Activated naive CD4-positive, alpha-beta T cell treated with anti-CD3 and anti-CD28 coated beads for 36 hours (primary cell): ENCODE measurements at regions of chr11 and their contacts with region 1.

Region 1: DNA sequence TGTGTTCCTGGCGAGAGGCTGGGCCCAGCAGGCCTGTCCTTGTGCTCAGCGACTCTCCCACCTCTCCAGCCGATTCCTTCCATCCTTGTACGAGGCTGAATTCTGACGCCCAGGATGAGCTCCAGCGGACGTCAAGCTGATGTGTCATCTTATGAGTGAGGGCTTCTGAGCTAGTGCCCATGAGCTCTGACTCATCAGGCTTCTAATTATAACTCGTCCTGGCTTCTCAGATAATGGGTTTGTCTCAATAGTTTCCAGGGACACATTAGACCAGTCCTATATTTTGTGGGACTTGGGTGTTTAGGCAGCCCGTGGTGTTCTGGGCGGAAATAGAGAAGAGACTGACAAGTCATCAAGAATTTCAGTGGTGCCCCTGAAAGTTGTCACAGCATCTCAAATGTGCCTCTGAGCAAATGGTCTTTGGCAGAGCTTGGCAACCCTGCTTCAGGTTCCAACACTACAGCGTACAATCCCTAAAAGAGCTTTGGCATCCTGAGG is 108.2 kb upstream of the CD44 start:
- DNase-seq: peak; percentile 55
- H3K4me3 Mint-ChIP-seq: peak overlapping the region; percentile 59
- H3K27ac Mint-ChIP-seq: peak overlapping the region; percentile 93
- H3K4me1 Mint-ChIP-seq: peaks cover 44% of the 10 kb centered on the region
- H3K27me3 Mint-ChIP-seq: no peaks in the 10 kb centered on the region

Region 2: GRCh38 chr11:34614344-34615104 is 416.2 kb before region 1 on chr11:
- CTCF ChIA-PET with region 1: no interaction called
- intact Hi-C with region 1: no loop called
- DNase-seq: no peak
- H3K4me3 Mint-ChIP-seq: no peak overlapping the region
- H3K27ac Mint-ChIP-seq: no peak overlapping the region
- H3K4me1 Mint-ChIP-seq: peaks cover 15% of the 10 kb centered on the region
- H3K27me3 Mint-ChIP-seq: peaks cover 7% of the 10 kb centered on the region

Region 3: GRCh38 chr11:34904421-34904955 is 126.3 kb before region 1 on chr11:
- CTCF ChIA-PET with region 1: no interaction called
- intact Hi-C with region 1: no loop called
- DNase-seq: no peak
- H3K4me3 Mint-ChIP-seq: no peak overlapping the region
- H3K27ac Mint-ChIP-seq: no peak overlapping the region
- H3K4me1 Mint-ChIP-seq: peaks cover 4% of the 10 kb centered on the region
- H3K27me3 Mint-ChIP-seq: no peaks in the 10 kb centered on the region

Region 4: DNA sequence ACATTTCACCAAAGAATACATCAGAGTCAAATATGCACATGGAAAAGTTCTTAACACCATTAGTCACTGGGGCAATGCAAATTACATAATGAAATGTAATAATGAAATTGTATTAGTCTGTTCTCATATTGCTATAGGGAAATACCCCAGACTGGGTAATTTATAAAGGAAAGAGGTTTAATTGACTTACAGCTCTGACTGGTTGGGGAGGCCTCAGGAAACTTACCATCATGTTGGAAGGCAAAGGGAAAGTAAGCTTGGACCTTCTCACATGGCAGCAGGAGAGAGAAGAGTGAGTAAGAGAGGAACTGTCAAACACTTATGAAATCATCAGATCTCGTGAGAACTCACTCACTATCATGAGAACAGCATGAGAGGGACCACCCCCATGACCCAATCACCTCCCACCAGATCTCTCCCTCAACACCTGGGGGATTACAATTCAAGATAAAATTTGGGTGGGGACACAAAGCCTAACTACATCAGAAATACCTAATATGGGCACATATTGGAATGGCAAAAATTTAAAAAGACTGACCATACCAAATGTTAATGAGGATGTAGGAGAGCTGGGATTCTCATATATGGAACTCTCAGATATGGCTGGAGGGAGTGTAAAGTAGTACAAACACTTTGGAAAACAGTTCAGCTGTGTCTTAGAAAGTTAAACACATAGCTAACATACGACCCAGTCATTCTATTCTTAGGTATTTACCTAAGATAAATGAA is 43.1 kb after region 1 on chr11:
- CTCF ChIA-PET with region 1: no interaction called
- intact Hi-C with region 1: loop called (anchors 1 kb)
- DNase-seq: peak; percentile 68
- H3K4me3 Mint-ChIP-seq: peak overlapping the region; percentile 31
- H3K27ac Mint-ChIP-seq: peak overlapping the region; percentile 83
- H3K4me1 Mint-ChIP-seq: peaks cover 67% of the 10 kb centered on the region
- H3K27me3 Mint-ChIP-seq: no peaks in the 10 kb centered on the region